ENCODE measurements at regions of chr10 and their contacts with region 1.

Region 1: DNA sequence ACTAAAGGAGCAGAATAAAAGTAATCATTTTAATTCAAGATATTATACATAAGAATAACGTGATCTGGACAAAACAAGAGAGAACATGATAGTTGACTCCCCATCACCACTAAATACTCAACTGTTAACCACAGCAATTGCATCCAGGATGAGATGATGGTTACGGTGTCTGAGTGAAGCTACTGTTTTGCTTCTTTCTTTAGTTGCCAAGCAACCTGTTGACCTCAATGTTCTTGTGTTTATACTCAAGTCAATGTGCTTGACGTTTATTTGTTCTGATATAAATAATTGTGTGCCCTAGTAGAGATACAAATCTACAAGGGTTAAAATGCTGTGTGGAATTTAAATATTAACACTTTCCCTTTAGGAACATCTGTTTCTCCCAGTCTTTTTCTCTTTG is 31.4 kb upstream of the MPP7 start:
- DNase-seq: peak in 8 of 9 donors; percentile 32 to 95 (median 91)
- ATAC-seq: peak; percentile 83
- H3K4me3 ChIP-seq: peak overlapping the region; percentile 62
- H3K4me3 Mint-ChIP-seq: peak overlapping the region; percentile 72 to 97 (median 91)
- H3K27ac ChIP-seq: peak overlapping the region; percentile 98
- H3K27ac Mint-ChIP-seq: peak overlapping the region; percentile 96 to 100 (median 99)
- H3K4me1 ChIP-seq: peaks cover 33 to 56% of the 10 kb centered on the region in 2 donors
- H3K4me1 Mint-ChIP-seq: peaks cover 44 to 88% (median 71%) of the 10 kb centered on the region in 7 donors
- H3K27me3 ChIP-seq: no peaks in the 10 kb centered on the region
- H3K27me3 Mint-ChIP-seq: peaks cover 0 to 9% (median 0%) of the 10 kb centered on the region in 5 donors

Region 2: GRCh38 chr10:26486991-26487850 is 1847.1 kb before region 1 on chr10:
- CTCF ChIA-PET with region 1: no interaction called
- POLR2A ChIA-PET with region 1: no interaction called
- intact Hi-C with region 1: loop called in 1 of 2 experiments (anchors 5 kb)
- DNase-seq: peak in 8 of 9 donors; percentile 50 to 86 (median 66)
- ATAC-seq: peak; percentile 85
- H3K4me3 ChIP-seq: peak overlapping the region; percentile 43
- H3K4me3 Mint-ChIP-seq: peak overlapping the region; percentile 8 to 83 (median 74)
- H3K27ac ChIP-seq: peak overlapping the region; percentile 84
- H3K27ac Mint-ChIP-seq: peak overlapping the region; percentile 90 to 97 (median 94)
- H3K4me1 ChIP-seq: peaks cover 56 to 64% of the 10 kb centered on the region in 2 donors
- H3K4me1 Mint-ChIP-seq: peaks cover 57 to 82% (median 74%) of the 10 kb centered on the region in 7 donors
- H3K27me3 ChIP-seq: no peaks in the 10 kb centered on the region
- H3K27me3 Mint-ChIP-seq: no peaks in the 10 kb centered on the region

Region 3: GRCh38 chr10:27099916-27100812 is 1234.1 kb before region 1 on chr10 and contains the start of gene ANKRD26:
- CTCF ChIA-PET with region 1: no interaction called
- POLR2A ChIA-PET with region 1: no interaction called
- intact Hi-C with region 1: loop called (anchors 5 to 10 kb)
- DNase-seq: peak; percentile 92 to 97 (median 95)
- ATAC-seq: peak; percentile 76
- H3K4me3 ChIP-seq: peak within 1 kb of the TSS; percentile 89
- H3K4me3 Mint-ChIP-seq: peak within 1 kb of the TSS; percentile 86 to 97 (median 92)
- H3K27ac ChIP-seq: peak within 1 kb of the TSS; percentile 84
- H3K27ac Mint-ChIP-seq: peak within 1 kb of the TSS; percentile 92 to 99 (median 98)
- H3K4me1 ChIP-seq: peaks cover 18 to 28% of the 10 kb centered on the region in 2 donors
- H3K4me1 Mint-ChIP-seq: peaks cover 30 to 64% (median 51%) of the 10 kb centered on the region in 7 donors
- H3K27me3 ChIP-seq: no peaks in the 10 kb centered on the region
- H3K27me3 Mint-ChIP-seq: peaks cover 0 to 2% (median 0%) of the 10 kb centered on the region in 5 donors
- total RNA-seq, gene ANKRD26: 6.4 to 14.2 (median 8.9) TPM

Region 4: GRCh38 chr10:27742195-27743011 is 591.9 kb before region 1 on chr10:
- CTCF ChIA-PET with region 1: no interaction called
- POLR2A ChIA-PET with region 1: no interaction called
- intact Hi-C with region 1: loop called in 1 of 2 experiments (anchors 1 kb)
- DNase-seq: peak; percentile 58 to 82 (median 77)
- ATAC-seq: peak; percentile 87
- H3K4me3 ChIP-seq: peak overlapping the region; percentile 73
- H3K4me3 Mint-ChIP-seq: peak overlapping the region; percentile 70 to 96 (median 86)
- H3K27ac ChIP-seq: no peak overlapping the region
- H3K27ac Mint-ChIP-seq: peak overlapping the region in 1 of 9 donors; percentile 20
- H3K4me1 ChIP-seq: peaks cover 27 to 42% of the 10 kb centered on the region in 2 donors
- H3K4me1 Mint-ChIP-seq: peaks cover 23 to 44% (median 29%) of the 10 kb centered on the region in 7 donors
- H3K27me3 ChIP-seq: peaks cover 16 to 55% of the 10 kb centered on the region in 2 donors
- H3K27me3 Mint-ChIP-seq: peaks cover 51 to 82% (median 65%) of the 10 kb centered on the region in 5 donors

Region 5: DNA sequence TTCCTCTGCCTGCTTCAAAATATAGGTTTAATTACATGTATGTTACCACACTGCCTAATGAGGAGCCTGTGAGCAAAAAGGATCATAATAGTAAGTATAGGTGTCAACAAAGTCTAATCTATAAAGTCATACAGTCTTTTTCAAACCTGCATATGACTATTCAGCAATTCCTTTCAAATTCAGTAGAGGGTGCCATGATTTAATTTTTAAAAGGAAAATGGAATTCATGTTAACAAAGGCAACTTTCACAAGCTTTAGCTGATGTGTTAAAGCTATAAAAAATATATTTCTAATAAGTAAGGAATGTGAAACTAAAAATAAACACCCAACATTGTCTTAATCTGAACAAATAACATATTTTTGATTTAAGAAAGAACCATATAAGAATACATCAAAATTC is 83.5 kb before region 1 on chr10:
- CTCF ChIA-PET with region 1: interaction called, 4 read pairs
- POLR2A ChIA-PET with region 1: interaction called, 4 read pairs
- intact Hi-C with region 1: loop called (anchors 1 to 2 kb)
- DNase-seq: peak in 5 of 9 donors; percentile 24 to 47 (median 43)
- ATAC-seq: peak; percentile 57
- H3K4me3 ChIP-seq: no peak overlapping the region
- H3K4me3 Mint-ChIP-seq: no peak overlapping the region
- H3K27ac ChIP-seq: no peak overlapping the region
- H3K27ac Mint-ChIP-seq: peak overlapping the region in 5 of 9 donors; percentile 3 to 80 (median 29)
- H3K4me1 ChIP-seq: no peaks in the 10 kb centered on the region
- H3K4me1 Mint-ChIP-seq: peaks cover 10 to 72% (median 50%) of the 10 kb centered on the region in 7 donors
- H3K27me3 ChIP-seq: no peaks in the 10 kb centered on the region
- H3K27me3 Mint-ChIP-seq: peaks cover 0 to 8% (median 0%) of the 10 kb centered on the region in 5 donors

Region 6: DNA sequence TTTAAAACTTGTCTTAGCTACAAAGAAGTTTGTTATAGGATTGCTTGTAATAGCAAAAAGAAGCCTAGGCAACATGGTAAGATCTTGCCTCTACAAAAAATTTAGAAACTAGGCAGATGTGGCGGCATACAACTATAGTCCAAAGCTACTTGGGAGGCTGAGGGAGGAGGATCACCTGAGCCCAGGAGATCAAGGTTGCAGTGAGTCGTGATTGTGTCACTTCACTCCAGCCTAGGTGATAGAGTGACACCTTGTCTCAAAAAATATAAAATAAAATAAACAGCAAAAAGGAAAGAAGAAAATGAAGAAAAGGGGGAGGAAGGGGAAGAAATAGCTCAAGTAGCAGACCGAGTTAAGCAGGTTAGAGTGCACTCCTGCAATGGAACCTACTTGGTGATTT is 15.6 kb after region 1 on chr10:
- CTCF ChIA-PET with region 1: no interaction called
- POLR2A ChIA-PET with region 1: interaction called, 9 read pairs
- intact Hi-C with region 1: loop called in 1 of 2 experiments (anchors 2 kb)
- DNase-seq: no peak
- ATAC-seq: no peak
- H3K4me3 ChIP-seq: no peak overlapping the region
- H3K4me3 Mint-ChIP-seq: no peak overlapping the region
- H3K27ac ChIP-seq: no peak overlapping the region
- H3K27ac Mint-ChIP-seq: peak overlapping the region in 1 of 9 donors; percentile 6
- H3K4me1 ChIP-seq: no peaks in the 10 kb centered on the region
- H3K4me1 Mint-ChIP-seq: peaks cover 0 to 6% (median 0%) of the 10 kb centered on the region in 7 donors
- H3K27me3 ChIP-seq: no peaks in the 10 kb centered on the region
- H3K27me3 Mint-ChIP-seq: peaks cover 0 to 22% (median 0%) of the 10 kb centered on the region in 5 donors

Region 7: DNA sequence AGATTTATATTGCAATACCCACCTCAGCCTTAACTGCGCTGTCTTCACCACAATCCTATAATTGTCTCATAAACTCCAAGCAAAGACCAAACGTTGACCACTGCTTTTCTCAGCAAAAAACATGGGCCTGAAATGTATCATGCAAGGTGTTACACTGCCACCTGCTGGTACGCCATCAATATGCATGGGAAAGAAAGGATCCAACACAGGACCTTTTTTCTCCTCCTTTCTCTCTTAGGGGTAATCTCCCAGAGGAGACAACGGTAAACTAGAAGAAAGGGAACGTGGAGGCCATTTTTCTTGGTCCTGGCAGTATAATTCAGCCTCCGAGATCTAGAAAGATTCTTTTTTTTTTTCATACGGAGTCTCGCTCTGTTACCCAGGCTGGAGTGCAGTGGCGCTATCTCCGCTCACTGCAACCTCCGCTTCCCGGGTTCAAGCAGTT is 47.6 kb after region 1 on chr10:
- CTCF ChIA-PET with region 1: interaction called, 63 read pairs
- POLR2A ChIA-PET with region 1: interaction called, 65 read pairs
- intact Hi-C with region 1: loop called (anchors 1 kb)
- DNase-seq: peak; percentile 55 to 82 (median 76)
- ATAC-seq: peak; percentile 98
- H3K4me3 ChIP-seq: no peak overlapping the region
- H3K4me3 Mint-ChIP-seq: peak overlapping the region in 4 of 10 donors; percentile 20 to 72 (median 34)
- H3K27ac ChIP-seq: no peak overlapping the region
- H3K27ac Mint-ChIP-seq: peak overlapping the region; percentile 30 to 93 (median 70)
- H3K4me1 ChIP-seq: peaks cover 0 to 20% of the 10 kb centered on the region in 2 donors
- H3K4me1 Mint-ChIP-seq: peaks cover 17 to 49% (median 43%) of the 10 kb centered on the region in 7 donors
- H3K27me3 ChIP-seq: no peaks in the 10 kb centered on the region
- H3K27me3 Mint-ChIP-seq: peaks cover 0 to 11% (median 0%) of the 10 kb centered on the region in 5 donors

Region 8: DNA sequence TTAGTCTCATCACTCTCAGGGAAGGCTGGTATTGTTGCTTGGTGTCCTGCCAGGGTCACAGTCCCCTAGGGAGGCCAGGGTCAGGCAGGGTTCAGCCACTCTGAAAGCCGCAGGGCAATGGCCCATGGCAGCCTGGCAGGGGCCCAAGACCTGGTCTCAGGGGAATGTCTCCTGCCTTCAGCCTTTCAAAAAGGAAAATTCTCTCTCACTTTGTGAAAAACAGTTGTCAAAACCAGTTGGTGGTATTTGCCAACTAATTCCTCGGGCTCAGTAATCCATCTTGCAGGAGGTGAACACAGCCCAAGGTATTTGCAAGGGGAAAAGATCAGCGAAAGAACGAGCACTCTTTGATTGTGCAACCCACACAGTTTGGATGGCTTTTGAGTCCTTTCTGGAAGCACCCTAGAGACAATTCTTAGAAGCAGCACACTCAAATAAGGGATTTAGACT is 1623.6 kb after region 1 on chr10:
- CTCF ChIA-PET with region 1: no interaction called
- POLR2A ChIA-PET with region 1: no interaction called
- intact Hi-C with region 1: no loop called
- DNase-seq: no peak
- ATAC-seq: no peak
- H3K4me3 ChIP-seq: no peak overlapping the region
- H3K4me3 Mint-ChIP-seq: no peak overlapping the region
- H3K27ac ChIP-seq: no peak overlapping the region
- H3K27ac Mint-ChIP-seq: no peak overlapping the region
- H3K4me1 ChIP-seq: no peaks in the 10 kb centered on the region
- H3K4me1 Mint-ChIP-seq: no peaks in the 10 kb centered on the region
- H3K27me3 ChIP-seq: no peaks in the 10 kb centered on the region
- H3K27me3 Mint-ChIP-seq: peaks cover 0 to 9% (median 0%) of the 10 kb centered on the region in 5 donors